ENCODE measurements at regions of chr17 and their contacts with region 1.

Region 1: DNA sequence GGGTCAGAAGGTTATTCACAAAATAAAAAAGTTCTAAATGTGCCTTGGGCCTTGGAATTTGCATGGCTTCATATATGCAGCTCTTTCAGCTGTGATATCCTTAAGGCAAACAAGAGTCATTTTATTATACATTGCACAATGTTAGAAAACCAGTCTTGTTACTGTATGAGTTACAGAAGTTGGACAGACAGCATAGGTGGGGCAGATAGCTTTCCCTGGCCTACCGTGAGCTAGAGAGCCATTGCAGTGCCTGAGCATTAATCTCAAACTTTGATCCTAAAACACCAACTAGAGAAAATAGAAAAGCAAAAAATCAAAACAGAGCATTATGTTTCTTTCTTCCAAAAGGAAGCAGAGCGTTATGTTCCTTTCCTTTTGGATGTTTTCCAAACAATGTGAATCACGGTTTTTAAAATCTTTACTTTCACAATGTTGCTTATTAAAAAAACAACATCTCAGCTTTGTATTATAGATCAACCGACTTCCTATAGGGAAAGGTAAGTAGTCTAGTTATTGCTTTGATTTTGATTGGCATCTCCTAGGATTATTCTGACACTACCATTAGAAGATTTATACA is 32.2 kb downstream of the ARHGAP44 start:
- DNase-seq: no peak
- ATAC-seq: no peak
- H3K4me3 ChIP-seq: no peak overlapping the region
- H3K27ac ChIP-seq: no peak overlapping the region
- H3K4me1 ChIP-seq: peaks cover 0 to 7% (median 0%) of the 10 kb centered on the region in 12 donors
- H3K27me3 ChIP-seq: no peaks in the 10 kb centered on the region
- CTCF ChIP-seq: no peak
- POLR2A ChIP-seq: no peak

Region 2: GRCh38 chr17:12667299-12667958 is 154.0 kb before region 1 on chr17:
- intact Hi-C with region 1: no loop called
- DNase-seq: peak in 4 of 5 donors; percentile 34 to 56 (median 48)
- ATAC-seq: peak; percentile 62 to 81 (median 72)
- H3K4me3 ChIP-seq: peak overlapping the region; percentile 47 to 81 (median 64)
- H3K27ac ChIP-seq: peak overlapping the region; percentile 51 to 91 (median 80)
- H3K4me1 ChIP-seq: peaks cover 0 to 33% (median 5%) of the 10 kb centered on the region in 12 donors
- H3K27me3 ChIP-seq: peaks cover 0 to 37% (median 5%) of the 10 kb centered on the region in 9 donors
- CTCF ChIP-seq: peak in 11 of 12 donors; percentile 7 to 64 (median 45)
- POLR2A ChIP-seq: peak in 1 of 2 donors; percentile 7

Region 3: GRCh38 chr17:12850996-12851395 is 29.5 kb after region 1 on chr17:
- intact Hi-C with region 1: no loop called
- DNase-seq: no peak
- ATAC-seq: no peak
- H3K4me3 ChIP-seq: no peak overlapping the region
- H3K27ac ChIP-seq: no peak overlapping the region
- H3K4me1 ChIP-seq: no peaks in the 10 kb centered on the region
- H3K27me3 ChIP-seq: no peaks in the 10 kb centered on the region
- CTCF ChIP-seq: no peak
- POLR2A ChIP-seq: no peak

Region 4: DNA sequence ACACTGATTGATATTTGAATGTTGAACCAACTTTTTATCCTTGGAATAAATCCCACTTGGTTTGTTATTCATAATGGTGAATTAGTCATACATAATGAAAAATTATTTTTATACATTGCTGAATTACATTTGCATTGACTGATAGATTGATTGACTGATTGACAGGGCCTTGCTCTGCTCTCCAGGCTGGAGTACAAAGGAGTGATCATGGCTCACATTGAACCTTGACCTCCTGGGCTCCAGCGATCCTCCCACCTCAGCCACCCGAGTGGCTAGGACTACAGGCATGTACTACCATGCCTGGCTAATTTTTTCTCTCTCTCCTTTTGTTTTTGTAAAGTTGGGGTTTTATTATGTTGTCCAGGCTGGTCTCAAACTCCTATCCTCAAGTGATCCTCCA is 65.6 kb after region 1 on chr17:
- intact Hi-C with region 1: loop called in 1 of 10 experiments (anchors 10 kb)
- DNase-seq: no peak
- ATAC-seq: no peak
- H3K4me3 ChIP-seq: no peak overlapping the region
- H3K27ac ChIP-seq: no peak overlapping the region
- H3K4me1 ChIP-seq: no peaks in the 10 kb centered on the region
- H3K27me3 ChIP-seq: no peaks in the 10 kb centered on the region
- CTCF ChIP-seq: no peak
- POLR2A ChIP-seq: no peak

Region 5: GRCh38 chr17:12985431-12986293 is 164.2 kb after region 1 on chr17:
- intact Hi-C with region 1: no loop called
- DNase-seq: peak in 4 of 5 donors; percentile 50 to 66 (median 56)
- ATAC-seq: peak; percentile 58 to 63 (median 62)
- H3K4me3 ChIP-seq: peak overlapping the region in 2 of 12 donors; percentile 0 to 12
- H3K27ac ChIP-seq: peak overlapping the region; percentile 18 to 74 (median 67)
- H3K4me1 ChIP-seq: peaks cover 4 to 38% (median 18%) of the 10 kb centered on the region in 12 donors
- H3K27me3 ChIP-seq: no peaks in the 10 kb centered on the region
- CTCF ChIP-seq: no peak
- POLR2A ChIP-seq: no peak